ENCODE measurements at regions of chr2 and their contacts with region 1.

Region 1: GRCh38 chr2:219736209-219736608 is 108.8 kb downstream of the SLC4A3 start:
- DNase-seq: no peak

Region 2: DNA sequence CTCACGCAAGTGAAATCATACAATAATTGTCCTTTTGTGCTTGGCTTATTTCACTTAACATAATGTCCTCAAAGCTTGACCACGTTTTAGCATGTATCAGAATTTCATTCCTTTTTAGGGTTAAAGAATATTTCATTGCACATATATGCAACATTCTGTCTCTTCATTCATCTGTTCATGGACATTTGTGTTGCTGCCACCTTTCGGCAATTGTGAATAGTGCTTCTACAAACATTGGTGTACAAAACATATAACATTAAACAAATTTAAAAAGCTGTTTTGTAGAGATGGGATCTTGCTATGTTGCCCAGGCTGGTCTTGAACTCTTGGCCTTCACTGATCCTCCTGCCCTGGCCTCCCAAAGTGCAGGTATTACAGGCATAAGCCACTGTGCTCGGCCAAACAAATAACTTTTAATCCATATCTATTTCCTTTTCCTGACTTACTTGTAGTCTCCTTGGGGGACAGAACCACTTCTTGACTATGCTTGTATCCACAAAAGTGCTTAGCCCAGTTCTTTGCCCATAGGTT is 100.5 kb after region 1 on chr2:
- intact Hi-C with region 1: loop called (anchors 5 kb)
- DNase-seq: peak in 1 of 10 donors; percentile 34